Activated CD8-positive, alpha-beta T cell treated with anti-CD3 and anti-CD28 coated beads, Interleukin-2, amount 10 ng/mL, durations not matched to agents 7 days and 5 days (primary cell): ENCODE measurements at regions of chr14 and their contacts with region 1.

Region 1: DNA sequence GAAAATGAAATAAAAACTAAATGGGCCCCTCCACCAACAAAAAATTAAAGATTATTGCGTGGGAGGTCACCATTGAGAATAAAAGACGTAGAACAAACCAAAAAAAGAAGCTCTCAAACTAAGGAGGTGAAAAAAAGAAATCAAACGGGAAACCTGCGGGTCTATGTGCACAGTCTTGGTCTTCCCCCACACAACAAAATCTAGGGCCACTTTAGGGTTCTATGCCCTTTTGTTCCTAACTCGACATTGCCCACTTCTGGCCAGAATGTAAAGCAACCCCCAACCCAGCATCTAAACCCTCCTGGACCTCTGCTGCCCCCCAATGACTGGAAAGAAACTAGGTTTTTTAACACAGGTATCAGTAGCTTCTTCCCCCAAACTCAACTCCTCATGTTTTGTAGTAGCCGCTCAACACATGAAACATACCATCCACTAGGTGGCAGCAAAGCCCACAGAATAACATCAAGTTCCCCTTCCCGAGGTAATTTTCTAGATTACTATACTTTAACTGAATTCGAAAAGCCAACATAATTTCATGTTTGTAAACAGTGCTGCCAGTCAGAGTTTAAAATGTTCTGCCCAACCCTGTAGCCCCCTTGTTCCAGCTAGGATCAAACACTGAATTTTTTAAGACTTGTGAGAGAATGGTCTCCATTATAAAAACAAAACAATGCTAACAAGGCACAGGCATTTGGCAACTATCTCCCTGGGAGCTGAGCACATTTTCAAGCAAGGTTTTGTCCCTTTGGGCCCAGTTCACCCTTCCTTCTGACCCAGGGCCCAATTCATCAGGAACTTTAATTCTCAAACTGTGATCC is 18.7 kb downstream of the DAD1 start:
- DNase-seq: peak; percentile 94
- ATAC-seq: peak; percentile 87
- H3K4me3 Mint-ChIP-seq: peak overlapping the region; percentile 80
- H3K27ac Mint-ChIP-seq: peak overlapping the region; percentile 92
- H3K4me1 Mint-ChIP-seq: peaks cover 62% of the 10 kb centered on the region
- H3K27me3 Mint-ChIP-seq: no peaks in the 10 kb centered on the region

Region 2: DNA sequence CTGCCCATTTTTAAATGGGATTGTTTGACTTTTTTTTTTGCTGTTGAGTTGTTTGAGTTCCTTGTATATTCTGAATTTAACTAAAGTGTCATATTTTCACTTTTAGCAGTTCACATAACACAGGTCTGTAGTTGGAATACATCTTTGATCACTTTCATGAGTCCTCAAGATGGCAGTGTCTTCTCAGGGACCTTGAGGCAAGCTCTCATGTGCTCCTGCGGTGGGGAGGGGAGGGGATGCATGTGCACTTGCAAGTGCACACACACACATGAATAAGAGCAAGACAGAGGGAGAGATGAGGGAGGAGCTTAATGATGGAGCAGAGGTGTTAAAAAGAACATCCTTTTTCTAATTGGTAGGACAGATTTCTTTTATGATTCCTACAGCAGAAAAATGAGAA is 605.3 kb before region 1 on chr14:
- CTCF ChIA-PET with region 1: interaction called, 11 read pairs
- POLR2A ChIA-PET with region 1: interaction called, 5 read pairs
- DNase-seq: peak; percentile 70
- ATAC-seq: peak; percentile 92
- H3K4me3 Mint-ChIP-seq: peak overlapping the region; percentile 13
- H3K27ac Mint-ChIP-seq: peak overlapping the region; percentile 8
- H3K4me1 Mint-ChIP-seq: peaks cover 31% of the 10 kb centered on the region
- H3K27me3 Mint-ChIP-seq: peaks cover 6% of the 10 kb centered on the region

Region 3: GRCh38 chr14:22122227-22122818 is 448.0 kb before region 1 on chr14:
- CTCF ChIA-PET with region 1: interaction called, 25 read pairs
- POLR2A ChIA-PET with region 1: interaction called, 6 read pairs
- DNase-seq: peak; percentile 45
- ATAC-seq: peak; percentile 50
- H3K4me3 Mint-ChIP-seq: peak overlapping the region; percentile 79
- H3K27ac Mint-ChIP-seq: peak overlapping the region; percentile 84
- H3K4me1 Mint-ChIP-seq: peaks cover 17% of the 10 kb centered on the region
- H3K27me3 Mint-ChIP-seq: peaks cover 5% of the 10 kb centered on the region

Region 4: GRCh38 chr14:22472935-22473854 is 97.1 kb before region 1 on chr14:
- CTCF ChIA-PET with region 1: no interaction called
- POLR2A ChIA-PET with region 1: no interaction called
- DNase-seq: no peak
- ATAC-seq: no peak
- H3K4me3 Mint-ChIP-seq: no peak overlapping the region
- H3K27ac Mint-ChIP-seq: no peak overlapping the region
- H3K4me1 Mint-ChIP-seq: no peaks in the 10 kb centered on the region
- H3K27me3 Mint-ChIP-seq: no peaks in the 10 kb centered on the region

Region 5: DNA sequence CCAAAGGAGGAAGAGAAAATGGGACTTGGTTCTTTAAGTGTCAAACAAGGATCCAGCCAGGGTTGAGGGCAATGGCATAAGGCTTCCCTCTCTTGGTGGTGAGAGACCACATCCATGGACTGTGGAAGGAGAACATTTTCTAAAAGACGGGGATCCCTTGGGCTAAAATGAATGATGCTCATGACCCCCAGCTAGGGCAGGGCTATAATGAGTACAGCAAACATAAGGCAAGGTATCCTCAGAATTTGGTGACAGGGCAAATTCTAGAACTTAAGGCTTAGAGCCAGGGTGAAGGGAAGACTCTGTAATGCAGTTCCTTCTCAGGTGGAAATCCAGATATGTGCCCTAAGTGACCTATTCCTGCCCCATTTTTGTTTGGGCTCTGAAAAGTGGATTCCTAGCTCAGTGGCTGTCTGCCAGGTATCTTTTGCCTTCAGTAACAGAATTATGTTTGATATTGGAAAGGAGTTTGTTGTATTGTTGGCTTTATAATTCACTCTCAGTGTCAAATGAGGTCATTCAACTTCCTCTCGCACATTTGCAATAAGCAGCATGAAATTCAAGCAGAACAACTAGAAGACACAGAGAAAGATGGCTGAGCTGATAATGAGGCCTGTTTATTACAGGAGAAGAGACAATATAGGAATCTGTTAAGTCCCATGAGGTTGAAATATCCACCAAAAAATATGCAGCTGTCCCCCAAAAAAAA is 58.1 kb before region 1 on chr14:
- CTCF ChIA-PET with region 1: interaction called, 35 read pairs
- POLR2A ChIA-PET with region 1: interaction called, 11 read pairs
- DNase-seq: no peak
- ATAC-seq: peak; percentile 5
- H3K4me3 Mint-ChIP-seq: peak overlapping the region; percentile 84
- H3K27ac Mint-ChIP-seq: peak overlapping the region; percentile 97
- H3K4me1 Mint-ChIP-seq: peaks cover 81% of the 10 kb centered on the region
- H3K27me3 Mint-ChIP-seq: no peaks in the 10 kb centered on the region

Region 6: GRCh38 chr14:22589096-22589839 is 18.9 kb after region 1 on chr14 and contains the start of gene DAD1:
- CTCF ChIA-PET with region 1: interaction called, 123 read pairs
- POLR2A ChIA-PET with region 1: interaction called, 55 read pairs
- DNase-seq: peak; percentile 100
- ATAC-seq: peak; percentile 91
- H3K4me3 Mint-ChIP-seq: peak within 1 kb of the TSS; percentile 99
- H3K27ac Mint-ChIP-seq: peak within 1 kb of the TSS; percentile 100
- H3K4me1 Mint-ChIP-seq: peaks cover 55% of the 10 kb centered on the region
- H3K27me3 Mint-ChIP-seq: peaks cover 8% of the 10 kb centered on the region
- total RNA-seq, gene DAD1: 130 to 147 TPM

Region 7: DNA sequence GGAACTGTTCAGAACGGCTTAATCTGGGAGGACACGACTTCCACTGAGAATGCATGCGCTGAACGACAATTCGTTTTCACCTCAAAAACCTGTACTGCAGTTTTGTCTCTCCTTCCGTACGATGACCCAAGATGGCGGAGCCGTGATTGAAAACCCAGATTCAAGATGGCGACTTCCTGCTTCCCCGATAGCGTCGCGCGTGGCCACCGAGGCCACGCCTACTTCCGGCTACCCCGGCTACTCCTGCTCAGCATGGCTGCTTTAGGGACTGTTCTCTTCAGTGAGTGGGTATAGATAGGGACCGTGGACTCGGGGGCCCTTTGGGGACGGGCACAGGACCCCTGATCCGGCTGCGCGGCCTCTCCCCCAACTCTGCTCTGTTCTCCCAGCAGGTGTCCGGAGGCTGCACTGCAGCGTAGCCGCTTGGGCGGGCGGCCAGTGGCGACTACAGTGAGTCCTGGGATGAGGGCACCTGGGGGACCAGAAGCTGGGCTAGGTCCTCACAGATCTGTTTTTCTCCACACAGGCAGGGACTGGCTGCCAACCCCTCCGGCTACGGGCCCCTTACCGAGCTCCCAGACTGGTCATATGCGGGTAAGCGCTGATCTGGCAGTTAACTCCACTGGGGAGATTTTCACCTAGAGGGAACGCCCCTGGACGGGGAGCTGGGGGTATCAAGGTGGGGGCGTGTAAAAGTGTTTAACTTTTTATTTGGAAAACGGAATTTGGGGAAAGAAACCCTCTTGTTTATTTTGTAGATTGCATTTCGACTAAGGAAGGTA is 259.5 kb after region 1 on chr14 and contains the start of gene MRPL52:
- CTCF ChIA-PET with region 1: interaction called, 30 read pairs
- POLR2A ChIA-PET with region 1: no interaction called
- DNase-seq: peak; percentile 95
- ATAC-seq: peak; percentile 93
- H3K4me3 Mint-ChIP-seq: peak within 1 kb of the TSS; percentile 95
- H3K27ac Mint-ChIP-seq: peak within 1 kb of the TSS; percentile 96
- H3K4me1 Mint-ChIP-seq: peaks cover 32% of the 10 kb centered on the region
- H3K27me3 Mint-ChIP-seq: no peaks in the 10 kb centered on the region
- total RNA-seq, gene MRPL52: 93.9 to 97.3 TPM

Region 8: GRCh38 chr14:22986508-22987054 is 416.2 kb after region 1 on chr14:
- CTCF ChIA-PET with region 1: interaction called, 35 read pairs
- POLR2A ChIA-PET with region 1: no interaction called
- DNase-seq: peak; percentile 93
- ATAC-seq: peak; percentile 50
- H3K4me3 Mint-ChIP-seq: no peak overlapping the region
- H3K27ac Mint-ChIP-seq: no peak overlapping the region
- H3K4me1 Mint-ChIP-seq: no peaks in the 10 kb centered on the region
- H3K27me3 Mint-ChIP-seq: no peaks in the 10 kb centered on the region